ENCODE measurements at regions of chr4 and their contacts with region 1.

Region 1: DNA sequence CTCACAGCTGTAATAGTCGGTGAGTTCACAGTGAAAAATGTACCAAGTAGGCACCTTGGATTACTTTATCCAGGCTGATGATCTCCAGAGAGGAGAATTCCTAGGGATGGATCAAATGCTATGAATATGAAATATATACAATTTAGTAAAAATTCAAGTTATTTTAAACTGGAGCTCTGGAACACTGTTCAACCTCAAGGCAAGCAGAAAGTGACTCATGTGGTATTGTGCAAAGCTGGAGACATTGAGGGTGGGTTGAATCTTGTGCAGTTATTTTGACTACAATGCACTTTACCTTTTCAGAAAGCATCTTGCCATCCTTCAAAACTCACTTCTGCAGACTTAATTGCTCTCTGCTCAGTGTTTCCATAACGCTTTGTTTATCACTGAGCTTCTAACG is 43.4 kb downstream of the OSTC start:
- DNase-seq: no peak
- H3K4me3 ChIP-seq: no peak overlapping the region
- H3K27ac ChIP-seq: no peak overlapping the region
- H3K4me1 ChIP-seq: no peaks in the 10 kb centered on the region
- CTCF ChIP-seq: no peak

Region 2: DNA sequence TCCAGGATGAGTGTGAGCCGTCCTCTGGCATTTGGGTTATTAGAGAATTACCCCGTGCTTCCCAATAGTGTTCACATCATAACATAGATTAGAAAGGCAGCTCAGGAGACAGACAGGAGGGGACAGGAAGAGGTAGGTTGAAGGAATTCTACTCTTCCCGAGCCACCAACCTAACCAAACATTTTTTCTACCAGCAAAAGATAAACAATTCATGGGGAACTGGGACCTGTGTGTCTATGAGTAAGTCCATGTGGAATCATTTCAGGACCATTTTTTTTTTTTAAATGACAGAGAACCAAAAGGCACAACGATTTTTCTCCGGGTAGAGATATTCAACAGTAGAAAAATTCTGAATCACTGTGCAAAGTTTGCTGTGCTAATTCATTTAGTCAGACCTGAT is 243.2 kb after region 1 on chr4:
- CTCF ChIA-PET with region 1: no interaction called
- POLR2A ChIA-PET with region 1: no interaction called
- intact Hi-C with region 1: loop called (anchors 10 kb)
- DNase-seq: no peak
- H3K4me3 ChIP-seq: no peak overlapping the region
- H3K27ac ChIP-seq: no peak overlapping the region
- H3K4me1 ChIP-seq: no peaks in the 10 kb centered on the region
- CTCF ChIP-seq: no peak

Measured in OCI-LY7 (cell line).